AG04450 (cell line): ENCODE measurements at regions of chr11 and their contacts with region 1.

Region 1: GRCh38 chr11:91248199-91248807 is 976.3 kb upstream of the FAT3 start:
- DNase-seq: peak; percentile 11
- H3K4me3 ChIP-seq: no peak overlapping the region
- H3K27ac ChIP-seq: no peak overlapping the region
- H3K27me3 ChIP-seq: no peaks in the 10 kb centered on the region
- CTCF ChIP-seq: peak; percentile 74

Region 2: DNA sequence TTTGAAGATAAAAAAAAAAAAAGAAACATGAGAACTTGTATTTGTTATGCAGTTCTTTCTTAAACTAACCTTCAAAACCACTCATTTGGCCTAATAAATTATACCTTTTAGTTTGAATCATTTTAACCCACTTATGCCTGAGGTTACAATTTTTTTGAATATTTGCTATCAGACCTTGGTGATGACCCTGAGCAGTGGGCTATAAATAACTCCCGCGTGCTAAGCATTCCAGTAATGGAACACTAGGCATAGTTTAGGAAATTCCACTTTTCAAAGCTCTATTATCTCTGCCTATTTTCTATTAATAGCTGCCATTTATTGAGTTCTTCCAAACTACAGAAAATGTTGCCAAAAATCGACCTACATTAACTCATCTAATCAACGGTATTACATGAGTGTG is 17.1 kb before region 1 on chr11:
- CTCF ChIA-PET with region 1: interaction called, 12 read pairs
- POLR2A ChIA-PET with region 1: no interaction called
- DNase-seq: no peak
- H3K4me3 ChIP-seq: no peak overlapping the region
- H3K27ac ChIP-seq: no peak overlapping the region
- H3K27me3 ChIP-seq: no peaks in the 10 kb centered on the region
- CTCF ChIP-seq: no peak